GM10248 (cell line): ENCODE measurements at regions of chr16 and their contacts with region 1.

Region 1: GRCh38 chr16:53549970-53550690 is 47.1 kb upstream of the AKTIP start:
- DNase-seq: peak; percentile 69
- CTCF ChIP-seq: peak; percentile 74

Region 2: GRCh38 chr16:53323924-53324323 is 226.2 kb before region 1 on chr16:
- CTCF ChIA-PET with region 1: no interaction called
- POLR2A ChIA-PET with region 1: no interaction called
- DNase-seq: no peak
- CTCF ChIP-seq: no peak

Region 3: GRCh38 chr16:53530046-53530445 is 20.1 kb before region 1 on chr16:
- CTCF ChIA-PET with region 1: interaction called, 30 read pairs
- POLR2A ChIA-PET with region 1: no interaction called
- DNase-seq: no peak
- CTCF ChIP-seq: no peak

Region 4: DNA sequence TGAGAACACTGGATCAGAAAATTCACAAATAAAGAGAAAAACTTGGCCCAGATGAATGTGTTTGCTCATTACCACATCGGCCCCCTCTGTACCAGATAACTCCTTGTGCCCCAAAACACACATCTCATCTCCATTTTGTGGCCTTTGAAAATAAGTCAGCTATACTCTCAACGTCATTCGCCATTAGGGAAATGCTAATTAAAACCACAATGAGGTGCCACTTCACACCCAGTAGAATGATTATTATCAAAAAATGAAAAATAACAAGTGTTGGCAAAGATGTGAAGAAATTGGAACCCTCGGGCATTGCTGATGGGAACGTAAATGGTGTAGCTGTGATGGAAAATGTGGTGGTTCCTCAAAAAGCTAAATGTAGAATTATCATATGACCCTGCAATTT is 12.5 kb before region 1 on chr16:
- CTCF ChIA-PET with region 1: interaction called, 30 read pairs
- POLR2A ChIA-PET with region 1: no interaction called
- DNase-seq: no peak
- CTCF ChIP-seq: no peak

Region 5: DNA sequence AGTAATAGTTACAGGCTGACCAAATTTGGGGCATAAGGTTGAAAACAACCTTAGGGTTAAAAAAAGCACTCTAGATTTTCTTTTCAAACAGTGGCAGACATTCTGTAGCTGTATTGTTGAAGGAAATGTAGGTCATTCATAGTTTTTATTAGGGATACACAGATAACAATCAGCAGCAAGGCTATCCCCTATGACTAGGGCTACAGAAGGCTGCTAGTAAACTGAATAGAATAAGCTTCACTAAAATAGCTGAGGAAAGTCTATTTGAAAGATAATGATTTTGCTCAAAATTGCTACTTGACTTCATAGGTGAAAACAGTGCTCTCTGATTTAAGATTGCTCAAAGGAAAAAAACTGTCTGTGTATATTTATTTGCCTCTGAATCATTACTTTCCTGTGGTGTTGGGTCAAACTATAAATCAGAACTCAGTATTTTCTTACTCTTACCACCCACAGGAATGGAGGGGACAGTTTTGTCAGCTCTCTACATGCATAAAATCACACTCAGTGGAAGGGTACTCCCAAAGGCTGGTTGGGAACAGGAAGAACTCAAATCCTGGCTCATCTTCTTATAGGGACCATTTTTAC is 128.7 kb after region 1 on chr16:
- CTCF ChIA-PET with region 1: no interaction called
- POLR2A ChIA-PET with region 1: no interaction called
- DNase-seq: no peak
- CTCF ChIP-seq: no peak